Motor neuron (in vitro differentiated cells): ENCODE measurements at regions of chr16 and their contacts with region 1.

Region 1: DNA sequence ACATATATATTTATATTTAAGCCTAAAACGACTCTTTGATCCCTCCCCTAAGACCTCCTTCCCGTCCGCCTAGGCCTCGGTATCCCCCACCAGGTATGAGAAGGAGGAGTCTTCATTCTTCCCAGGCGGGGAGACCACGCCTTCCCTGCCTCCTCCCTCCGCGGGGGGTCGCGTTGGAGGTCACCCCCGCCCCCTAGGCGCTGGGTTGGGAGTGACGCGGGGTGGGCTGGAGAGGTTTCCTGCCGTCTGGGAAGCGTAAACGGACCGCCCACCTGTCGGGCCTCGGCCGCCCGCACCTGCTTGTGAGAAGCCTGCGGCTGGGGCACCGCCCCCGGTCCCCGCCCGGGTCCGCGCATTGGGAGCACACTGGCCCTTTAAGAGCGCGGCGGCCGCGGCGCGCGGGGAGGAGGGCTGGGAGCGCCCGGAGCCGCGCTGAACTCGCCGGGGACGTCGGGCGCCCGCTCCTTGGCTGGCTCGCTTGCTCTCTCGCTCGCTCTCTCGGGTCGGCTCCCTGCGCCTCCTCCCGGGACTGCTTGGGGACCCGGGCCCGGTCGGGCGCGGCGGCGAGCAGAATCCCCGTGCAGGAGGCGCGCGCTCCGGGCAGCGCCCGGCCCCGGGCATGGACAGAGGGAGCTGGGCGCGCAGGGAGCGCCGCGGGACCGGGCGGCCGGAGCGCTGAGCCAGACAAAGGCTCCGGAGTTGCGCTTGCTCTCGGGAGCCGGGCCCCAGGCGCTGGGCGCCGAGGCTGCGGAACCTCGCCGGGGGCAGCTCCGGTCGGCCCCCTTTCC is at the start of gene MMP15:
- ATAC-seq: peak; percentile 42 to 75 (median 63)
- H3K4me3 ChIP-seq: peak within 1 kb of the TSS; percentile 58 to 81 (median 63)
- H3K27ac ChIP-seq: peak within 1 kb of the TSS; percentile 7 to 30
- H3K4me1 ChIP-seq: peaks cover 26 to 33% of the 10 kb centered on the region in 2 donors
- total RNA-seq, gene MMP15: 2.6 to 30.3 (median 14.8) TPM

Region 2: DNA sequence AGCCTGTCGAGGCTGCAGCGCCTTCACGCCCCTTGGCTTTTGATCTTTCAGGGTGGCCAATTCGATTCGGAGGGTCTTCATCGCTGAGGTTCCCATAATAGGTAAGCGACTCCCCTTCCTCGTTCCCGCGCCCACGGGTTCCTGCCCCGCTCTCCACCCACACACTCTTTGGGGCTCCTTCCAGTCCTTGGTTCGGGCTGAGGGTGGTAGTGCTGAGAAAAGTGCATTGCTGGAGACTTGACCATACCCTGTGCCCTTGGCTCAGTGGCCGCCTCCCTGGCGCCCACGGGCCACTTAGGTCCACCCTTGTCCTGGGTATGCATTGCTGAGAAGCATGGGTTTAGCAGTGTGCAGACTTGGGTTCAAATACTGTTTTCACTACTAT is 562.6 kb before region 1 on chr16:
- in situ Hi-C with region 1: no loop called
- ATAC-seq: peak; percentile 33 to 58 (median 40)
- H3K4me3 ChIP-seq: peak overlapping the region; percentile 59 to 98 (median 87)
- H3K27ac ChIP-seq: peak overlapping the region; percentile 92 to 94
- H3K4me1 ChIP-seq: peaks cover 5% of the 10 kb centered on the region in 2 donors

Region 3: DNA sequence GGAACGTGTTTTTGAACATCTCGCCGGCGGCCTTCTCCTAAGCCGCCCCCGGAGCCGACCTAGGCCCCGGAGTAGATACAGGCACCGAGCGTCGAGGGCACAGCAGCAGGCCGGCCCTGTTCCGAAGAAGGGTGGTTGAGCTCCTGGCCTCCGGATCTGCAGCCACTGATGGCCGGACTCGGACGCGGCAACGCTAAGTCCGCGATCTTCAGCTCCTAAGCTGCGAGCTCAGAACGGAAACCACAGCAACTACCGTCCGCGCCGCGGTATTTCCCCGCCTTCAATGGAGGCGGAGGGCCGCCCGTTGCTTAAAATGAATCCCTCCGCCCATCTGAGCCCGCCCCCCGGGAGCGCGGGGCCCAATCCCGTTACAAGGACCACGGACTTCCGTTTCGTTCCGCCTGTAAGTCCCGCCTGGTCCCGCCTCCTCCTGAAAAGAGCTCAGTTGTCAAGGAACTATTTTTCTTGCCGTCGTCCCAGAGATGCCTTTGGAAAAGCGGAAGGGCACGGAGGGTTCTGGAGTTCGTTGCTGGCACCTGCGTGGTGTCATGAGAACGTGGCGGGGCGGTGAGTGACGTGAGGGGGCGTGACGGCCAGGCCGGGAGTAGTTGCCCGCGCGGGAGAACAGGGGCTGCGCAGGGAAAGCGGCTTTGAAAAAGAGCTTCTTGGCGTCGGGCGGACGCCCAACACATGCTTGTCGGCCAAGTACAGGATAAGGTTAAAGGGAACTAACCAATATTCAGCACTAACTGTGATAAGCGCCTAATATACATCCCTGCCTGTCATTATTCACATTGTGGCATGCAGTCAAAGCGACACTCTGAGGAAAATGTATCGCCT is 103.8 kb after region 1 on chr16 and contains the start of gene CFAP20:
- in situ Hi-C with region 1: loop called in 3 of 9 experiments (anchors 5 to 25 kb)
- ATAC-seq: peak; percentile 85 to 93 (median 91)
- H3K4me3 ChIP-seq: peak within 1 kb of the TSS; percentile 71 to 91 (median 81)
- H3K27ac ChIP-seq: peak within 1 kb of the TSS; percentile 86 to 92
- H3K4me1 ChIP-seq: peaks cover 5 to 33% of the 10 kb centered on the region in 2 donors
- total RNA-seq, gene CFAP20: 36.8 to 92.8 (median 67.3) TPM